Colonic mucosa (tissue), 4 donors: ENCODE measurements at regions of chr14 and their contacts with region 1.

Region 1: GRCh38 chr14:102304611-102305509 is at the start of gene MOK:
- DNase-seq: peak; percentile 98
- H3K4me3 ChIP-seq: peak within 1 kb of the TSS; percentile 82
- H3K27ac ChIP-seq: peak within 1 kb of the TSS; percentile 32
- H3K4me1 ChIP-seq: no peaks in the 10 kb centered on the region
- H3K27me3 ChIP-seq: no peaks in the 10 kb centered on the region
- CTCF ChIP-seq: no peak
- total RNA-seq, gene MOK: 4.8 to 6.9 TPM

Region 2: GRCh38 chr14:102164241-102164641 is 140.6 kb before region 1 on chr14:
- intact Hi-C with region 1: loop called (anchors 10 kb)
- DNase-seq: no peak
- H3K4me3 ChIP-seq: no peak overlapping the region
- H3K27ac ChIP-seq: no peak overlapping the region
- H3K4me1 ChIP-seq: no peaks in the 10 kb centered on the region
- H3K27me3 ChIP-seq: no peaks in the 10 kb centered on the region
- CTCF ChIP-seq: no peak